ENCODE measurements at regions of chr1 and their contacts with region 1.

Region 1: DNA sequence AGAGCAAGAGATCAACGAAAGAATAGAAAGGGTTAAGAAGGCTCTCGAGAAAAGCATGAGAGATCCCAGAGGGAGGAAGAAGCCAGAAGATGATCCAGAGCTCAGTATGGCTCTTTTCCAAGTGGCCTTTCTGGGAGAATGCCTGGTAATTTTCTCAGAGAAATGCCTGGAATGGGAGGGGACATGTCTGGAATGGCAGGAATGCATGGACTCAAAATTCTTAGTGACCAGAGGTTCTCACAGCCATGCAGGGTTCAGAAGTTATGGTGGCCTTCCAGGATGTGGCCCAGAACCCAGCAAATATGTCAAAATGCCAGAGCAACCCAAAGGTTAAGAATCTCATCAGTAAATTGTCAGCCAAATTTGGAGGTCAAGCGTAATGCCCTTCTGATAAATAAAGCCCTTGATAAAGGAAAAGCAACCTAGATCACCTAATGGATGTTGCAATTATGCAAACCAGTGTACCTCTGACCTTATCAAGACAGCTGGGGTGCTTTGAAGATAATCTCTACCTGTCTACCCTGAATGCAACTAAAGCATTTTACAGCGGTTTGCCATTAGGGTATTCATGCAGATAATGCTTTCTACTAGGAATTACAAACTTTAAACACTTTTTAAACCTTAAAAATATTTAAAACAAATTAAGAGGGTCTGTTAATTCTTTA is 53.1 kb downstream of the NBPF6 start:
- DNase-seq: peak; percentile 79 to 96
- H3K4me3 ChIP-seq: no peak overlapping the region
- H3K27ac ChIP-seq: peak overlapping the region; percentile 76
- H3K4me1 ChIP-seq: peaks cover 34% of the 10 kb centered on the region
- H3K27me3 ChIP-seq: no peaks in the 10 kb centered on the region
- CTCF ChIP-seq: no peak

Region 2: GRCh38 chr1:108199781-108200570 is 303.2 kb before region 1 on chr1 and contains the start of gene SLC25A24:
- CTCF ChIA-PET with region 1: no interaction called
- POLR2A ChIA-PET with region 1: interaction called, 8 read pairs
- intact Hi-C with region 1: loop called (anchors 5 kb)
- DNase-seq: peak; percentile 67 to 90
- H3K4me3 ChIP-seq: peak within 1 kb of the TSS; percentile 91
- H3K27ac ChIP-seq: peak within 1 kb of the TSS; percentile 80
- H3K4me1 ChIP-seq: peaks cover 24% of the 10 kb centered on the region
- H3K27me3 ChIP-seq: no peaks in the 10 kb centered on the region
- CTCF ChIP-seq: no peak
- total RNA-seq, gene SLC25A24: 47.3 and 60.5 TPM in 2 replicates

Region 3: DNA sequence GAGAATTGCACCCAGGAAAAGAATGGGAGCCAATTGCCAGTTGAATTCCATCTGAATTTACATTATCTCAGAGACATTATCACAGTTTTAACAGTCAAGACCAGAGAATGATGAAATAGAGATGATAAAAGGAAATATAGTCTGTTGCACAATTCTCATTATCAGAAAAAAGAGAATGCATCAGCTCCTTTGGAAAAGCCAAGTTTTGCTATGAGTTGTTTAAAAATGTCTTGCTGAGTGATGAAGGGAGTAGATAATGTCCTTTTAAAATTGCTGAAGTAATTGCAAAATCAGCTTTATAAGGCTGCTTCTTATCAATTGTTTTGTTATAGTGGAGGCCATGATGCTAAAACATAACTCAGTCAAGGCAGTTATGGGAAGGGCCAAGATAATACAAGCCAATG is 18.8 kb after region 1 on chr1:
- CTCF ChIA-PET with region 1: no interaction called
- POLR2A ChIA-PET with region 1: interaction called, 10 read pairs
- intact Hi-C with region 1: no loop called
- DNase-seq: no peak
- H3K4me3 ChIP-seq: no peak overlapping the region
- H3K27ac ChIP-seq: no peak overlapping the region
- H3K4me1 ChIP-seq: no peaks in the 10 kb centered on the region
- H3K27me3 ChIP-seq: no peaks in the 10 kb centered on the region
- CTCF ChIP-seq: no peak

Region 4: GRCh38 chr1:109446085-109446695 is 943.0 kb after region 1 on chr1:
- CTCF ChIA-PET with region 1: no interaction called
- POLR2A ChIA-PET with region 1: interaction called, 12 read pairs
- intact Hi-C with region 1: no loop called
- DNase-seq: no peak
- H3K4me3 ChIP-seq: no peak overlapping the region
- H3K27ac ChIP-seq: no peak overlapping the region
- H3K4me1 ChIP-seq: peaks cover 3% of the 10 kb centered on the region; the same call in 1 of the 2 replicates
- H3K27me3 ChIP-seq: peaks cover 37% of the 10 kb centered on the region
- CTCF ChIP-seq: no peak

Measured in PC-9 (cell line).